Aorta (tissue), 5 donors: ENCODE measurements at regions of chr21 and their contacts with region 1.

Region 1: GRCh38 chr21:16082038-16082816 is 352.4 kb downstream of the USP25 start:
- DNase-seq: no peak
- ATAC-seq: no peak
- H3K4me3 ChIP-seq: no peak overlapping the region
- H3K27ac ChIP-seq: no peak overlapping the region
- H3K4me1 ChIP-seq: no peaks in the 10 kb centered on the region
- H3K27me3 ChIP-seq: no peaks in the 10 kb centered on the region

Region 2: DNA sequence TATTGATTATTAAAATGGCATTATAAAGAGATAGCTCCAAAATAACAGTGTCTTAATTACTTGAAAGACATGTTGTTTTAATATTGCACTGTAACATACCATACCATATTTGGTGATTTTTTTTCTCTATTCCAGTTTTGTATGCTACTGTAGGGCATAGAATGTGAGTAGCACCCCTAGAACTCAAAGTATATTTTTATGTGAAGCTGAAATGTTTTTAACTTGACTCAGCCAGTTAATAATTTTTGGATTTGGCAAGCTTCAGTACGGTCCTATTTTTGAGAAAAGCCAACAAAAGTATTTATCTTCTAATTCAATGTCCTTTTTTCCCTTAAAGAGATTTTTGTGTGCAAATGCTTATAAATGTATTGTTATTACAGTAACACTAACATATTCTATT is 241.4 kb after region 1 on chr21:
- intact Hi-C with region 1: loop called in 1 of 2 experiments (anchors 5 kb)
- DNase-seq: no peak
- ATAC-seq: no peak
- H3K4me3 ChIP-seq: no peak overlapping the region
- H3K27ac ChIP-seq: no peak overlapping the region
- H3K4me1 ChIP-seq: peaks cover 0 to 1% of the 10 kb centered on the region in 2 donors
- H3K27me3 ChIP-seq: no peaks in the 10 kb centered on the region

Region 3: DNA sequence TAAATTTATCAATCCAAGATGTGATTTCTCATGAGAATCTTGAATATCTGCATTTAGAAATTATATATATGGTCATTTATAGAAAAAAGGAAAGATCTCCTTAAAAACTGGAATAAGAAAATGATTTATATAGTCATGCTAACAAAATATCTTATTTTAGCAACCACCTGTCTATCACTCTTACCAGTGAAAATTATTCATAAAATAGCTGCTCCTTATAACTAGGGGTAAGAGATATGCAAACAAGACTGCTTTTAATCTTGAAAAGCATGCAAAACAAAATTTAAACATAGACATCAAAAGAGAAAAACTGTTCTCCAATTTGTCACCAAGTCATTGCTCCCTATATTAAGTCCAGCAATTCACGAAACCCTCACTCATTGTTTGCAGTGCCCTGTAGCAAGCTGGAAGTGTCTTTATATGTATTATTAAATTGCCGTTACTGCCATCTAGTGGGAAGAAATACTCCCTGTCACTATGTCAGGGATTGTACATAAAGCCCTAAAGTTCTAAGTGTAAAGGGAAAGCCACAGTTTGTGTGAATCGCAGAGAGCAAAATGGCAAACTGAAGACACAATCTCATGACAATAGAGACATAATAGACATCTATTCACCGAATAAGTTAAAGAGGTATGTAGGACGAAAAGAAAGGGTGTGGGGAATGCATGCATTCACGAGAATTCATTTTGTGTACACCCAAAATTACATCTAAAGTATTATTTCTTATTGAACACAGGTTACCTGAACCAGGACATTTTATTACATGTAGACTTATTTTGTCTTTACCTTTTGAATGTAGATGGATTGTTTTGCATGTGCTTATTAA is 248.1 kb after region 1 on chr21:
- intact Hi-C with region 1: loop called (anchors 5 kb)
- DNase-seq: no peak
- ATAC-seq: peak; percentile 90
- H3K4me3 ChIP-seq: no peak overlapping the region
- H3K27ac ChIP-seq: no peak overlapping the region
- H3K4me1 ChIP-seq: no peaks in the 10 kb centered on the region
- H3K27me3 ChIP-seq: no peaks in the 10 kb centered on the region

Region 4: DNA sequence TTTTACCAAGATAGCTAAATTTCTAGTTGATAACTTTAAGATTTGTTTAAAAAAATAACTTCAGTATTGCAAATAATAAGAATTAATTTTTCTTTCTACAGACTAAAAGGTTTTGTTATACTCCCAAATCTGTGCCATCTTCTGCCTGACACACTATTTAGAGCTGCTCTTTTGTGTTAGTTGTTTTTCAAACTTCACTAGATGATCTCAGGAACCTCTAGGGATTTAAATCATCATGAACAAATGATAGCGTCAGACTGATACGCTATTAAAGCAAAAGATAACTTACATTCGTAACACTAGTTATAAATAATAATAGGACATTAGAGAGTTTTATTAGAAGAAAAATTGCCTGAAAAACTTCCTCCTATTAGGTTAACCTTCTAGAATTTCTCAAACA is 1187.5 kb after region 1 on chr21:
- intact Hi-C with region 1: loop called in 1 of 2 experiments (anchors 10 kb)
- DNase-seq: no peak
- ATAC-seq: no peak
- H3K4me3 ChIP-seq: no peak overlapping the region
- H3K27ac ChIP-seq: no peak overlapping the region
- H3K4me1 ChIP-seq: no peaks in the 10 kb centered on the region
- H3K27me3 ChIP-seq: no peaks in the 10 kb centered on the region